ENCODE measurements at regions of chr2 and their contacts with region 1.

Region 1: DNA sequence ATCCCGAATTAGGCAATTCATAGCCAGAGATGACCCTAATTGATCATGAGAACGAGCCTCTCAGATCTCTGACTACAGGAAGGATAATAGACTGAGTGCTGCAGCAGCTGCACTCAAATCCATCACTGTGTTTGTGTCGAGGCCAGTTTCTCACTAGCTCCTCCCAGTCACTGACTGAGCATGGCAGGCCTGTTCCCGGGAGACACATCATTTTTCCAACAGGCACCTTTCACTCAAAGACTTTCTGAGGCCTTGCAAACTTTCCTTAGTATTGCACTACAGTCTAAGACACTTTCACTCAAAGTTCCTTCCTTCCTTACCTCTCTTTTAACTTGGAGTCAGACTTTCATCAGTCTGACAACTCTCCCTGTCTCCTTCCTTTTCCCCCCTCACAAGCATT is 13.7 kb downstream of the SOS1 start:
- DNase-seq: no peak
- H3K4me3 ChIP-seq: no peak overlapping the region
- H3K27ac ChIP-seq: no peak overlapping the region
- H3K4me1 ChIP-seq: no peaks in the 10 kb centered on the region
- H3K27me3 ChIP-seq: no peaks in the 10 kb centered on the region
- CTCF ChIP-seq: no peak

Region 2: DNA sequence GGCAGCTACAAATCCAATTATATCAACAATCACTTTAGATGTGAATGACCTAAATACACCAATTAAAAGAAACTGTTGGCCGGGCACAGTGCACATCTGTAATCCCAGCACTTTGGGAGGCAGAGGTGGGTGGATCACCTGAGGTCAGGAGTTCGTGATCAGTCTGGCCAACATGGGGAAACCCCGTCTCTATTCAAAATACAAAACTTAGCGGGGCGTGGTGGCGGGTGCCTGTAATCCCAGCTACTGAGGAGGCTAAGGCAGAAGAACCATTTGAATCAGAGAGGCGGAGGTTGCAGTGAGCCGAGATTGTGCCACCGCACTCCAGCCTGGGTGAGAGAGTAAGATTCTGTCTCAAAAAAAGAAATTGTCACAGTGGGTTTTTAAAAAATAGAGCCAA is 779.6 kb before region 1 on chr2:
- CTCF ChIA-PET with region 1: no interaction called
- POLR2A ChIA-PET with region 1: no interaction called
- intact Hi-C with region 1: no loop called
- DNase-seq: no peak
- H3K4me3 ChIP-seq: no peak overlapping the region
- H3K27ac ChIP-seq: no peak overlapping the region
- H3K4me1 ChIP-seq: 0 out of 2 replicates have a peak, but pooled peaks cover 11% of the 10 kb centered on the region
- H3K27me3 ChIP-seq: no peaks in the 10 kb centered on the region
- CTCF ChIP-seq: no peak

Region 3: DNA sequence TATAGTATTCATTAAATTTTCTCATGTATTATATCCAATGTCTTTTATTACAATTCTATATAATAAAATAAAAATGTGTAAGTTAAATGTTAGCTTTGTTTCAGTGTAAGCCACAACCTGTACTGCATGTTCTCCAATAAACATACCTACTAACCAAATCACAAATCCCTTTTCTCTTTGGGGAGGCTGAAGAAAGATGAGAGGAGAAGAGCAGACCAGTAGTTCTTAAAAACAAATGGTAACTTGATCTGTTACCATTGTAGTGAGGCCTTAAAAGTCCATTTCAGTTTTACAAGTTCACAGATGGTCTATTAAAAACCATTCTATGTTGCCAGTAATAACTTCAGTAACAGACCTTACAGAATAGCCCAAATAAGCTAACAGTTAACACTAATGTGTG is 86.8 kb before region 1 on chr2:
- CTCF ChIA-PET with region 1: no interaction called
- POLR2A ChIA-PET with region 1: interaction called, 12 read pairs
- intact Hi-C with region 1: no loop called
- DNase-seq: no peak
- H3K4me3 ChIP-seq: no peak overlapping the region
- H3K27ac ChIP-seq: no peak overlapping the region
- H3K4me1 ChIP-seq: no peaks in the 10 kb centered on the region
- H3K27me3 ChIP-seq: no peaks in the 10 kb centered on the region
- CTCF ChIP-seq: no peak

Region 4: DNA sequence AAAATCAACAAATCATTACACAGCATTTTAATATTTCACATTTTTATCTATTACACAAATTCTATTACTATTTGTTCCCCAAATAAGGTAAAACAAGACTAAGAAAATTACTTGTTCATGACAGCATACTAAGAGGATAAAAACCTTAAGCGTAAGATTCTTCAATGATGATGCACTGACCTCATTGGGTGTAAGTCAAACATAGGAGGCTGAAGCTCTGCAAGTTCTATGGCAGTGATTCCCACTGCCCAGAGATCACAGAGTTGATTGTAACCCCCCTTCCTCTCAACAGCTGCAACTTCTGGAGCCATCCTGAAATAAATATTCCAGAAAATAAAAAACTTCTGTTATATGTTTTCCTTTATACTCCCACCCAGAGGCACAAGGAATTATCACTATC is 218.8 kb after region 1 on chr2:
- CTCF ChIA-PET with region 1: no interaction called
- POLR2A ChIA-PET with region 1: no interaction called
- intact Hi-C with region 1: no loop called
- DNase-seq: no peak
- H3K4me3 ChIP-seq: no peak overlapping the region
- H3K27ac ChIP-seq: no peak overlapping the region
- H3K4me1 ChIP-seq: no peaks in the 10 kb centered on the region
- H3K27me3 ChIP-seq: no peaks in the 10 kb centered on the region
- CTCF ChIP-seq: no peak

Region 5: GRCh38 chr2:40016151-40016885 is 909.2 kb after region 1 on chr2:
- CTCF ChIA-PET with region 1: no interaction called
- POLR2A ChIA-PET with region 1: no interaction called
- intact Hi-C with region 1: no loop called
- DNase-seq: no peak
- H3K4me3 ChIP-seq: no peak overlapping the region
- H3K27ac ChIP-seq: no peak overlapping the region
- H3K4me1 ChIP-seq: no peaks in the 10 kb centered on the region
- H3K27me3 ChIP-seq: no peaks in the 10 kb centered on the region
- CTCF ChIP-seq: no peak

Measured in PC-9 (cell line).